OCI-LY7 (cell line): ENCODE measurements at regions of chr3 and their contacts with region 1.

Region 1: GRCh38 chr3:187935623-187936156 is 190.4 kb upstream of the BCL6 start:
- DNase-seq: peak; percentile 91
- H3K4me3 ChIP-seq: peak overlapping the region; percentile 25
- H3K27ac ChIP-seq: peak overlapping the region; percentile 99
- H3K4me1 ChIP-seq: peaks cover 100% of the 10 kb centered on the region
- CTCF ChIP-seq: no peak

Region 2: DNA sequence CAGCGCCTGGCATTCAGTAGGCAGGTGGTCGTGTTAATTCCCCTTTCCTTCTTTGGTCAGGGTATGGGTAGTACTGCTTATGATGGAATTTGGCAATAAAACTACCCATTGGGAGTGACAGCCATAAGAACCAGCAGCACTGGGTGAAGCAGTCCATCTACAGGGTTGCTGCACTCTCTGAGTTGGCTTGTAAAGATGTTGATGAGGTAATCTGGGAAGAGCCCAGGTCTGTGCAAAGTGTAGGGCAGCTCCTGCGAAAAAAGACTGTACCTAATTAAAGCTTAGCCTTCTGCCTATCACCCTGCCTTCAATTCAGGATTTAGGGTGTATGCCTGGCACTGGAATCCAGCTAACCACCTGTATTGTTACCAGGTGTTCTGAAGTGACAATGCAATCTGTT is 1300.2 kb before region 1 on chr3:
- CTCF ChIA-PET with region 1: no interaction called
- POLR2A ChIA-PET with region 1: no interaction called
- intact Hi-C with region 1: no loop called
- DNase-seq: no peak
- H3K4me3 ChIP-seq: no peak overlapping the region
- H3K27ac ChIP-seq: no peak overlapping the region
- H3K4me1 ChIP-seq: no peaks in the 10 kb centered on the region
- CTCF ChIP-seq: no peak

Region 3: DNA sequence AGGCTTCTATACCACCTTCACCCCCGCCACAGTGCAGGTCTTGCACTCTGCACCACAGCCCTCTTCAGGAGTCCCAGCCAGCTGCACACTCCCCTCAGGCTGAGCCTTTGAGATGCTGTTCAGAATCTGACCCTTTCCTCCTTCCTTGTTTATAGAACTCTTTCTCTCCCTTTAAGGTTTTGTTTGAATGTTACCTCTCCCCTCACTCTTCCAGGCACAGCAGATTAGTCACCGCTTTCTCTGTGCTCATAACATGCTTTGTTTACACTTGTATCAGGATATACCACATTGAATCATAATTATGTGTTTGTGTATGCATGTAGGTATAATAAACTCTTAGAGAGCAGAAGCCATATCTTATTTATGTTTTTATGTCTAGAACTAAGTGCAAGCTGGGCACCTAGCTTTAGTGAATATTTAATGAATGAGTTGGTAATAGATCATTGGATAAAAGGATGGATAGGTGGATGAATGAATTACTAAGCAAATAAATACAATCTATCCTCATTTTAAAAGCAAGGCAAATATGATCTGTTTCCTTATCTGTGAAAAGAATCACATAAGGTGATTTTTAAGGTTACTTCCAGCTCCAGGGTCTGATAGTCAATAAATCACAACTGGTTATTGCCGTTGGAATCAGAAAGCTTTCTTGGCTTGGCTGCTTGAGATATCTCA is 21.9 kb before region 1 on chr3:
- CTCF ChIA-PET with region 1: interaction called, 10 read pairs
- POLR2A ChIA-PET with region 1: interaction called, 184 read pairs
- intact Hi-C with region 1: no loop called
- DNase-seq: peak; percentile 73
- H3K4me3 ChIP-seq: peak overlapping the region; percentile 9
- H3K27ac ChIP-seq: peak overlapping the region; percentile 97
- H3K4me1 ChIP-seq: peaks cover 90% of the 10 kb centered on the region
- CTCF ChIP-seq: no peak

Region 4: DNA sequence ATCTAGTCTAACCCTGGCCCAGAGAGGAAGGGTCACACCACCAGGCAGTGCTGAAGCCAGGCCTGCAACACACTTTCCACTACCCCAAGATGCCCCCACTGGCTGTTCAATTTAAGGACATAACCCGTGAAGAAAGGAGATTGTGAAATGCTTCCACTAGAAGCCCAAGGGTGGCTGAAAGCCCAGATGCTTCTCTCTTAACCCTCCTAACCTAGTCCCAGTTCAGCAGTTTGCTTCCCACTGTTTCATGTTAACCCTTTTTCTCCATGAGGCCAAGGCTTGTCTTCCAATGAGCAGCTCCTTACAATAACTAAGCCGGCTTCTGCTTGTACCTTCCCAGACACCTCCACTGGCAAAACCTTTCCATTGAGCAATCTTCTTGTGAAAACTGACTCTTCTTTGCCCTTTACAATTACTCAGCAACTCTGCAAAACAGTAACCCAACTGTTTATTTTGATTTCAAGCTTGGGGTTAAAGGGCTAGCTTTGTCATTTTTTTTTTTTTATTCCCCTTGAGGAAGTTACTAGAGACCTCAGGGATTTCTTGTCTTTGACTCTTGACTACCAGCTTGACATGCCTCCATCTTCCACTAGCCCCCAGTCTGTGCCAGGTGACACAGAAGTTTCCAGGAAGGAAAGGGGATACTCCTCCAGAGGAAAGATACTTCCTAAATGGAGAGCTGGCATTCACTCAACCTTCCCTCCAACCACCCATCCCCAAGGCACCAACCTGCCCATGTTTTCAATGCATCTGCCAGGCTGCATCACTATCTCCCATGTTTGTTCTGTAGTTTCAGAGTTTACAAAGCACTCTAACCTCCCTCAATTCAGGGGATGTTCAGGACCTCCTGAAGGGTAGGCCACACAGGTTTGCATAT is 19.6 kb after region 1 on chr3:
- CTCF ChIA-PET with region 1: interaction called, 9 read pairs
- POLR2A ChIA-PET with region 1: interaction called, 1,356 read pairs
- intact Hi-C with region 1: no loop called
- DNase-seq: no peak
- H3K4me3 ChIP-seq: no peak overlapping the region
- H3K27ac ChIP-seq: peak overlapping the region; percentile 99
- H3K4me1 ChIP-seq: peaks cover 100% of the 10 kb centered on the region
- CTCF ChIP-seq: 0 out of 2 replicates have a peak, but pooled peaks have one; percentile 21